ENCODE measurements at regions of chr16 and their contacts with region 1.

Region 1: DNA sequence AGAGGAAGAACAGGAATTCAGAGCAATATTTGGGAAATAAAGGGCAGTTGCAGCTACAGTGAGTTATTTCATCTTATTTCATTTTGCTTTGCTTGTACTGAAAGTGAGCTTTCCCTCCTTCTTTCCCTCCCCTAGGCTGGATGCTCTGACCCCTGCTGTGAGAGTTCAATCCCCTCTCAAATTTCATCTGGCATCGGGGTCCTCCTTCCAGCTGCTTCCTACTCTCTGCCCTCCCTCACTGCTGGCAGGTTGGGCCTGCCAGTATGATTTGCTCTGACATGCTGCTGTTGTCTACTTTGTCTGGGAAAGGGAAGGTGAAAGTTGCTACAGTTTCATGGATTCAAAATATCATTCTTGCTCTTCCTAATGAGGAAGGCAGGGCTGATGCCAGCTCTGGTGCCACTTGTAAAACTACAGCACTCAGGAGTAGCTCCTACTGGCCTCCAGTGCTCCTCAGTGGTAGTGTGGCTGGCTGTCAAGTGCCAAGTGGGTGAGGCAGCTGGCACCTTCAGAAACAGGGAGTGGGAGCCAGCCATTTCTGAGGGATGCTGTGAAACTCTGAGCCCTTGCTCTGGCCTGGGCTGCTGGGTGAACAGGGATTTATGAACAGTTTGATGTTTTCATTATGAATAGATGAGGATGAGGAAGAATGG is 408.6 kb downstream of the HAPSTR1 start:
- DNase-seq: no peak
- ATAC-seq: no peak
- H3K4me3 ChIP-seq: no peak overlapping the region
- H3K4me3 Mint-ChIP-seq: no peak overlapping the region
- H3K27ac ChIP-seq: no peak overlapping the region
- H3K27ac Mint-ChIP-seq: no peak overlapping the region
- H3K4me1 ChIP-seq: no peaks in the 10 kb centered on the region
- H3K4me1 Mint-ChIP-seq: no peaks in the 10 kb centered on the region
- H3K27me3 ChIP-seq: no peaks in the 10 kb centered on the region
- H3K27me3 Mint-ChIP-seq: peaks cover 14% of the 10 kb centered on the region
- CTCF ChIP-seq: no peak

Region 2: DNA sequence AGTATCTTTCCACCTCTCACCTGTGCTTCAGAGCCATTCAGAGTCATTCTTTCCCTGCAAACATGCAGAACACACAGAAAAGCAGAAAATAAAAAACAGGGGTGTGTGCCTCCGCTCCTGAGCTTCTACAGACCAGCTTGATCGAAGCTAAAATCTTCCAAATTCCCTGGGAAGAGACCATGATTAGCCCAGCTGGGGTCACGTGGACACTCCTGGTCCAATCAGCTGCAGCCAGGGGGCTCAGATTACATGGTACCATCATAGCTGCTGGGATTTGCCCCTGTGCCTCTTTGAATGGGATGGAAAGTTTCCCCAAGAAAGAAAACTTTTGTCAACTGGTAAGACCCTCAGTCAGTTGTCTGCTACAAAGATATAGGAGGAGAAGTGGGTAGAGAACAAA is 1069.7 kb before region 1 on chr16:
- CTCF ChIA-PET with region 1: no interaction called
- POLR2A ChIA-PET with region 1: no interaction called
- intact Hi-C with region 1: loop called in 1 of 2 experiments (anchors 5 kb)
- DNase-seq: no peak
- ATAC-seq: no peak
- H3K4me3 ChIP-seq: no peak overlapping the region
- H3K4me3 Mint-ChIP-seq: no peak overlapping the region
- H3K27ac ChIP-seq: no peak overlapping the region
- H3K27ac Mint-ChIP-seq: no peak overlapping the region
- H3K4me1 ChIP-seq: no peaks in the 10 kb centered on the region
- H3K4me1 Mint-ChIP-seq: no peaks in the 10 kb centered on the region
- H3K27me3 ChIP-seq: no peaks in the 10 kb centered on the region
- H3K27me3 Mint-ChIP-seq: peaks cover 7% of the 10 kb centered on the region
- CTCF ChIP-seq: no peak

Region 3: DNA sequence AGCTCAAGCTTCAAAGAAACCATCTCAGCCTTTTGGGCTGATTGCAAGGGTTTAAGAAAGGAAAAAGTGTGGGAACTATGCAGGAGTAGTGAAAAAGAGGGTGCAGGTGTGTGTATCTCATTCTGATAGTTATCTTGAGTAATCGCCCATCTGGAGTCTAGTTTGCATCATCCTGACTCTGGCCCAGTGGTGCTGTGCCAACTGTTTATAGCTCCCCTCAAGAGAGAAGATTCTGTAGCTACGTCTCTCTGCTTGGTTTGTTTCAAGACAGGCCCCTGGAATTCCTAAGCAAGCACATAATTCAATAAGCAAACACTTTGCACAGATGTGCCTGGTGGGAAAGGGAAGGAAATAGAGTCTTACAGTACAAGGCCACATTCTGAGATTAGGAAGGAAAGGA is 264.2 kb before region 1 on chr16:
- CTCF ChIA-PET with region 1: no interaction called
- POLR2A ChIA-PET with region 1: no interaction called
- intact Hi-C with region 1: no loop called
- DNase-seq: no peak
- ATAC-seq: no peak
- H3K4me3 ChIP-seq: no peak overlapping the region
- H3K4me3 Mint-ChIP-seq: no peak overlapping the region
- H3K27ac ChIP-seq: no peak overlapping the region
- H3K27ac Mint-ChIP-seq: no peak overlapping the region
- H3K4me1 ChIP-seq: no peaks in the 10 kb centered on the region
- H3K4me1 Mint-ChIP-seq: no peaks in the 10 kb centered on the region
- H3K27me3 ChIP-seq: no peaks in the 10 kb centered on the region
- H3K27me3 Mint-ChIP-seq: peaks cover 14% of the 10 kb centered on the region
- CTCF ChIP-seq: no peak

Region 4: DNA sequence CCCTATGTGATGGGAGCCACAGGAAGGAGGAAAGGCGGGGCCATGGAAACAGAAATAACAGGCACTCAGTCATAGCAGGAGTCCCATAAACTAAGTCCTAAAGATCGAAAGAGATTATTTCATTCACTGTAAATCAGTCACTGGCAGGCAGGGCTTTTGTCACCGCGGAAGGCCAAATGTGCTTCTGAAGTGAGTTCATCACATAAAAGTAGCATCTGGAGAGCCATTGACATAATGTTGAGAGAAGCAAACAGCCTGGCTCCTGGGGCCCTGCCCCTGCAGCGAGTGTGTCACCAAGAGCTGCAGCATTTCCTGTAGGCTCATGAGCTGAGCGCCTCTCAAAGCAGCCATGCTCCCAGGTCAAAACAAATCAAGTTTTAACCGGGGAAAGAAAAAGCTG is 67.6 kb after region 1 on chr16:
- CTCF ChIA-PET with region 1: no interaction called
- POLR2A ChIA-PET with region 1: no interaction called
- intact Hi-C with region 1: no loop called
- DNase-seq: no peak
- ATAC-seq: no peak
- H3K4me3 ChIP-seq: no peak overlapping the region
- H3K4me3 Mint-ChIP-seq: no peak overlapping the region
- H3K27ac ChIP-seq: no peak overlapping the region
- H3K27ac Mint-ChIP-seq: no peak overlapping the region
- H3K4me1 ChIP-seq: no peaks in the 10 kb centered on the region
- H3K4me1 Mint-ChIP-seq: no peaks in the 10 kb centered on the region
- H3K27me3 ChIP-seq: no peaks in the 10 kb centered on the region
- H3K27me3 Mint-ChIP-seq: no peaks in the 10 kb centered on the region
- CTCF ChIP-seq: no peak